ENCODE measurements at regions of chr15 and their contacts with region 1.

Region 1: DNA sequence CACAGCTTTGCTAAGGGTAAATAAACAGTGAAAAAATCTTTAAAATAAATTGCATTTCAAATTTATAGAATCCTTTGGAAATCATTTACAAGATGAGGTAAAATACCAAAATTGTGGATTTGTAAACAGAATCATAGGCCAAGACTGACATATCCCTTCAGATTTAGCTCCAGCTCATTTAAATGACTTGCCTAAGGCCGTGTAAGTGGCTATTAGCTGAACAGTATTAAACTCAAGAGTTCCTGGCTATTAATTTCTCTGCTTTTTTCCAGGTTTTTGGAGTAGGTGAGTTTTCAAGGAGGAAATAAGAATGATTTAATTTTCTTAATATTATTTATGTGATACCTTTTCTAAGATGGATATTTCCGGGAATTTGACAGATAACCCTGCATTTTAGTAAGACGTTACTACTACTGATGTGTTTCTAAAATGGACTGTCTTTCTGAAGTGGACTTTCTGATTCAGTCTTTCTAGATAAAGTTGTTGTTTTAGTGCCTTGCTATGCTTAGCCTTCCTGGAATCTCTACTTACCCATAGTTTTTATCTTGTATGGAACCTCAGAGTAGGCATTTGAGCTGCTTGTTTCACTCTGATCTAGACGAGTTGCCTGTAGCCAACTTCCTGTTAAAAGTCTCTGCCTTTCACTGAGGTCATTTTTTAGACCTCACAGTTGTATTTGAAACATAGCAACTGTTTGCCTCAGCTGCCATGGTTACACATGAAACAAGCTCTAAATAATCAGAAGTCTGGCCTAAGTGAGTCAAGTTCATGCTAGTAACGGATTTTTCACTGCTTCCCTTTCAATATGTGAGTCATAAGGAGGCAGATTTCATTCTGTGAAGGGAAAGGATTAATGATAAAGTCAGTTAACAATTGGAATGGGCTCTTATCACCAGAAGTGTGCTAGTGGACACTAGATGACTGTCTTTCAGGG is 127.0 kb downstream of the KLHL25 start:
- DNase-seq: peak in 8 of 9 donors; percentile 37 to 78 (median 67)
- ATAC-seq: peak; percentile 96
- H3K4me3 ChIP-seq: no peak overlapping the region
- H3K4me3 Mint-ChIP-seq: peak overlapping the region in 6 of 10 donors; percentile 38 to 60 (median 53)
- H3K27ac ChIP-seq: peak overlapping the region; percentile 65
- H3K27ac Mint-ChIP-seq: peak overlapping the region; percentile 89 to 95 (median 92)
- H3K4me1 ChIP-seq: peaks cover 17% of the 10 kb centered on the region in 2 donors
- H3K4me1 Mint-ChIP-seq: peaks cover 19 to 25% (median 21%) of the 10 kb centered on the region in 7 donors
- H3K27me3 ChIP-seq: no peaks in the 10 kb centered on the region
- H3K27me3 Mint-ChIP-seq: no peaks in the 10 kb centered on the region

Region 2: GRCh38 chr15:85618956-85619491 is 48.7 kb before region 1 on chr15:
- CTCF ChIA-PET with region 1: interaction called, 3 read pairs
- POLR2A ChIA-PET with region 1: interaction called, 3 read pairs
- intact Hi-C with region 1: loop called in 1 of 2 experiments (anchors 1 kb)
- DNase-seq: peak in 6 of 9 donors; percentile 13 to 68 (median 24)
- ATAC-seq: peak; percentile 77
- H3K4me3 ChIP-seq: peak overlapping the region; percentile 3
- H3K4me3 Mint-ChIP-seq: no peak overlapping the region
- H3K27ac ChIP-seq: peak overlapping the region; percentile 6
- H3K27ac Mint-ChIP-seq: no peak overlapping the region
- H3K4me1 ChIP-seq: peaks cover 29 to 38% of the 10 kb centered on the region in 2 donors
- H3K4me1 Mint-ChIP-seq: peaks cover 14 to 41% (median 26%) of the 10 kb centered on the region in 7 donors
- H3K27me3 ChIP-seq: no peaks in the 10 kb centered on the region
- H3K27me3 Mint-ChIP-seq: no peaks in the 10 kb centered on the region

Region 3: DNA sequence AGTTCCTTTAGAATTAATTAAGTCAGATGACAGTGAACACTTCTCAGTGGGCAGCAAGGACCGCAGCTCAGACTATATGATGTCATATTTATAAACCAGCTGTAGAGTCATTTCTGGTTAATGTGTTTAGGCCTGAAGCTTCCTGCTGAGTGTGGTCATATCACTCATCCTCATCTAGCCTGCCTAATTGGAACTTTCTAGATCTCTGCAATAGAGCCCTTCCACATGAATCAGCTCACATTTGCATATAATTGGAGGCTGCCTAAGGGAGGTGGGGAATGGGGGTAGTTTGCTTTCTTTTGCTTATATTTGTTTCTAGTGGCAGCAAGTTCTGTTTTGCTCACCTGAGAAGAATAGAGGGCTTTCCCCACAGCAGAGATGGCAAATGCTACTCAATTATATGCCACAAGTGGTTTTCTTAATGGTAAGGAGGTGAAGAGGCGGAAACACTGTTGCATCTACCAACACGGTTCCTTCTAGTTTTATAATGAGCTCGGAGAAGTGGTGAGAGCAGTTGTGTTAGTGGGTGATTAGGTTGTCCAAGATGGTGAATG is 21.1 kb before region 1 on chr15:
- CTCF ChIA-PET with region 1: interaction called, 4 read pairs
- POLR2A ChIA-PET with region 1: no interaction called
- intact Hi-C with region 1: loop called in 1 of 2 experiments (anchors 1 kb)
- DNase-seq: peak in 1 of 9 donors; percentile 35
- ATAC-seq: peak; percentile 78
- H3K4me3 ChIP-seq: no peak overlapping the region
- H3K4me3 Mint-ChIP-seq: peak overlapping the region in 2 of 10 donors; percentile 21 to 51
- H3K27ac ChIP-seq: no peak overlapping the region
- H3K27ac Mint-ChIP-seq: peak overlapping the region in 6 of 9 donors; percentile 10 to 81 (median 48)
- H3K4me1 ChIP-seq: peaks cover 8 to 35% of the 10 kb centered on the region in 2 donors
- H3K4me1 Mint-ChIP-seq: peaks cover 28 to 45% (median 38%) of the 10 kb centered on the region in 7 donors
- H3K27me3 ChIP-seq: no peaks in the 10 kb centered on the region
- H3K27me3 Mint-ChIP-seq: no peaks in the 10 kb centered on the region

Region 4: DNA sequence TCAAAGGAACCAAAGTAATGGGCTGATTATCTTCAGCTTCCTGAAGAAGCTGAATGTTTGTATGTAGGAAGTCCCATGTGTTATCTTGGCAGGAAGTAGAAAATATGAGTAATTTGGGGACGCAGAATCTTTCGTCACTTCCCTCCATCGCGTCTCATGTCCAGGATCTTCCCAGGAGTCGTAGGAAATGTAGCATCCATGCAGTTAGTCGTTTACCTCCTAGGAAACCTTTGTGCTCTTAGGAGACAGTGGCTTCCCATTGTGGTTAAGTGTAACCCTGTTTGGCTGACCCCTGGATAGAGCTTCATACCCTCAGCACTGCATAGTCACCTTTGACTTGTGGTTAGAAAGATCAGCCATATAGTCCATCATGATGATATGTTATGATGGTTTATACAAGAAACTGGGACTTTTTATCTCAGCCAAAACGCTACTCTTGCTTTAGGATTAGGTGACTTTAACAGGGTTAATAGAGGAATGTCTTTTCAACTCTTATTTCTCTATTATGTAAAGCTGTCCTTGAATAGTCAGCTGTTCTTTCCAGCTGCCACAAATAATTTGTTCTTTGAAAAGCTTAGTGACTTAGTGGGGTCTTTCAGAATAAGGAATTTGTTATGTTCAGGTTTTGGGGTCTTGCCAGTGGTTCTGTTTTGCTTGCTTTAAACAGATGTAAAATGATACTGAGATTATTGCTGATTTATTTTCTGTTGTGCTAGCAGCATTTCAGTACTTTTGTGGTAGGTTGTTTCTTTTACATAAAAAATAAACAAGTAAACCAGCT is 34.8 kb after region 1 on chr15:
- CTCF ChIA-PET with region 1: no interaction called
- POLR2A ChIA-PET with region 1: no interaction called
- intact Hi-C with region 1: loop called in 1 of 2 experiments (anchors 1 kb)
- DNase-seq: peak in 4 of 9 donors; percentile 16 to 52 (median 28)
- ATAC-seq: peak; percentile 45
- H3K4me3 ChIP-seq: peak overlapping the region; percentile 50
- H3K4me3 Mint-ChIP-seq: peak overlapping the region; percentile 35 to 89 (median 82)
- H3K27ac ChIP-seq: peak overlapping the region; percentile 78
- H3K27ac Mint-ChIP-seq: peak overlapping the region; percentile 88 to 98 (median 94)
- H3K4me1 ChIP-seq: peaks cover 52 to 74% of the 10 kb centered on the region in 2 donors
- H3K4me1 Mint-ChIP-seq: peaks cover 45 to 90% (median 80%) of the 10 kb centered on the region in 7 donors
- H3K27me3 ChIP-seq: no peaks in the 10 kb centered on the region
- H3K27me3 Mint-ChIP-seq: no peaks in the 10 kb centered on the region

Measured in naive thymus-derived CD4-positive, alpha-beta T cell (primary cell).